PC-9 (cell line): ENCODE measurements at regions of chr17 and their contacts with region 1.

Region 1: GRCh38 chr17:5249615-5250014 is 15.0 kb upstream of the SCIMP start:
- DNase-seq: peak; percentile 59
- H3K4me3 ChIP-seq: no peak overlapping the region
- H3K27ac ChIP-seq: no peak overlapping the region
- H3K4me1 ChIP-seq: no peaks in the 10 kb centered on the region
- H3K27me3 ChIP-seq: no peaks in the 10 kb centered on the region
- CTCF ChIP-seq: peak; percentile 84

Region 2: DNA sequence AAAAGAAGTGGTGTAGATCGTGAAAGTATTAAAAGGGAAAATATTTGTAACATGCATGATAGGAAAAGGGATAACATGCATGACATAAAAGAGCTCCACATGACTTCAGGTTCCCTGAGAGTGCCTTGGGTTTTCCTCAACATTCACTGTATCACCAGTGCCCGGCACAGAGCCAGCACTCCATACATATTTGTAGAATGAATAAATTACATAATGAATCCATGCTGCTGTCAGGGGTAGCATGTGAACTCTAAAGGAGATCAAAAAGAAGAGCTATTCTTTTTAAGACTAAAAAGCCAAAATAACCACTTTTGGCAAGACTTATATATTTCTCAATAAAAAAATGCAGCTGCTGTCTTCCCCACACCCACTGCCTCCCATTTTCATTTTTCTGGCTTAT is 55.3 kb before region 1 on chr17:
- CTCF ChIA-PET with region 1: no interaction called
- POLR2A ChIA-PET with region 1: no interaction called
- intact Hi-C with region 1: no loop called
- DNase-seq: no peak
- H3K4me3 ChIP-seq: no peak overlapping the region
- H3K27ac ChIP-seq: no peak overlapping the region
- H3K4me1 ChIP-seq: peaks cover 5% of the 10 kb centered on the region; the same call in 1 of the 2 replicates
- H3K27me3 ChIP-seq: no peaks in the 10 kb centered on the region
- CTCF ChIP-seq: no peak

Region 3: DNA sequence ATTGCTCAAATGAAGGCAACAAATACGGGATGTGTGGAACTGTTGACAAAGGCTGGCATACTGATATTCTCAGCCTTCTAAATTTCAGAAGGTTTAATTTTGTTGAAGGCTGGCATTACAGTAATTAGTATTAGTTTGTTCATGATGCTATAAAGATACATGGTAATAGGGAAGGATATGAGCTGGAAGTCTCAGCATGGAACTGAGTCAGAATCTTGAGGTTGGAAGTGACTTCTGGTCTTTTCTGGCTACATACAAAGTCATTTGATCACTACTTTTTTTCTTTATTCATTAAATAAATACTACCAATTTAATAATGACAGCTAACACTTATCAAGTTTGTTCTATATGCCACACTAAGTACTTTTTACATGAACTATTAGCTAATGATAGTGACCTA is 55.0 kb after region 1 on chr17:
- CTCF ChIA-PET with region 1: interaction called, 3 read pairs
- POLR2A ChIA-PET with region 1: no interaction called
- intact Hi-C with region 1: loop called (anchors 1 kb)
- DNase-seq: no peak
- H3K4me3 ChIP-seq: no peak overlapping the region
- H3K27ac ChIP-seq: no peak overlapping the region
- H3K4me1 ChIP-seq: no peaks in the 10 kb centered on the region
- H3K27me3 ChIP-seq: no peaks in the 10 kb centered on the region
- CTCF ChIP-seq: no peak

Region 4: GRCh38 chr17:5381542-5381941 is 131.9 kb after region 1 on chr17:
- CTCF ChIA-PET with region 1: interaction called, 6 read pairs
- POLR2A ChIA-PET with region 1: no interaction called
- intact Hi-C with region 1: loop called (anchors 5 kb)
- DNase-seq: no peak
- H3K4me3 ChIP-seq: no peak overlapping the region
- H3K27ac ChIP-seq: peak overlapping the region; percentile 24; the same call in 1 of the 2 replicates
- H3K4me1 ChIP-seq: peaks cover 4% of the 10 kb centered on the region; the same call in 1 of the 2 replicates
- H3K27me3 ChIP-seq: no peaks in the 10 kb centered on the region
- CTCF ChIP-seq: no peak

Region 5: GRCh38 chr17:5419356-5419958 is 169.8 kb after region 1 on chr17 and contains the start of gene NUP88:
- CTCF ChIA-PET with region 1: no interaction called
- POLR2A ChIA-PET with region 1: no interaction called
- intact Hi-C with region 1: loop called (anchors 10 kb)
- DNase-seq: peak; percentile 91 to 96
- H3K4me3 ChIP-seq: peak within 1 kb of the TSS; percentile 98
- H3K27ac ChIP-seq: peak within 1 kb of the TSS; percentile 99
- H3K4me1 ChIP-seq: peaks cover 52% of the 10 kb centered on the region
- H3K27me3 ChIP-seq: no peaks in the 10 kb centered on the region
- CTCF ChIP-seq: no peak
- total RNA-seq, gene NUP88: 88.6 and 93.1 TPM in 2 replicates

Region 6: GRCh38 chr17:5438716-5439445 is 189.3 kb after region 1 on chr17 and contains the start of gene C1QBP:
- CTCF ChIA-PET with region 1: interaction called, 7 read pairs
- POLR2A ChIA-PET with region 1: interaction called, 3 read pairs
- intact Hi-C with region 1: loop called (anchors 1 kb)
- DNase-seq: peak; percentile 82 to 96
- H3K4me3 ChIP-seq: peak within 1 kb of the TSS; percentile 72
- H3K27ac ChIP-seq: peak within 1 kb of the TSS; percentile 28
- H3K4me1 ChIP-seq: peaks cover 18% of the 10 kb centered on the region
- H3K27me3 ChIP-seq: no peaks in the 10 kb centered on the region
- CTCF ChIP-seq: peak; percentile 96
- total RNA-seq, gene C1QBP: 206 and 230 TPM in 2 replicates

Region 7: GRCh38 chr17:6421700-6422604 is 1172.3 kb after region 1 on chr17:
- CTCF ChIA-PET with region 1: no interaction called
- POLR2A ChIA-PET with region 1: no interaction called
- intact Hi-C with region 1: loop called (anchors 10 kb)
- DNase-seq: peak; percentile 58 to 83
- H3K4me3 ChIP-seq: no peak overlapping the region
- H3K27ac ChIP-seq: no peak overlapping the region
- H3K4me1 ChIP-seq: no peaks in the 10 kb centered on the region
- H3K27me3 ChIP-seq: peaks cover 84% of the 10 kb centered on the region
- CTCF ChIP-seq: peak; percentile 95

Region 8: DNA sequence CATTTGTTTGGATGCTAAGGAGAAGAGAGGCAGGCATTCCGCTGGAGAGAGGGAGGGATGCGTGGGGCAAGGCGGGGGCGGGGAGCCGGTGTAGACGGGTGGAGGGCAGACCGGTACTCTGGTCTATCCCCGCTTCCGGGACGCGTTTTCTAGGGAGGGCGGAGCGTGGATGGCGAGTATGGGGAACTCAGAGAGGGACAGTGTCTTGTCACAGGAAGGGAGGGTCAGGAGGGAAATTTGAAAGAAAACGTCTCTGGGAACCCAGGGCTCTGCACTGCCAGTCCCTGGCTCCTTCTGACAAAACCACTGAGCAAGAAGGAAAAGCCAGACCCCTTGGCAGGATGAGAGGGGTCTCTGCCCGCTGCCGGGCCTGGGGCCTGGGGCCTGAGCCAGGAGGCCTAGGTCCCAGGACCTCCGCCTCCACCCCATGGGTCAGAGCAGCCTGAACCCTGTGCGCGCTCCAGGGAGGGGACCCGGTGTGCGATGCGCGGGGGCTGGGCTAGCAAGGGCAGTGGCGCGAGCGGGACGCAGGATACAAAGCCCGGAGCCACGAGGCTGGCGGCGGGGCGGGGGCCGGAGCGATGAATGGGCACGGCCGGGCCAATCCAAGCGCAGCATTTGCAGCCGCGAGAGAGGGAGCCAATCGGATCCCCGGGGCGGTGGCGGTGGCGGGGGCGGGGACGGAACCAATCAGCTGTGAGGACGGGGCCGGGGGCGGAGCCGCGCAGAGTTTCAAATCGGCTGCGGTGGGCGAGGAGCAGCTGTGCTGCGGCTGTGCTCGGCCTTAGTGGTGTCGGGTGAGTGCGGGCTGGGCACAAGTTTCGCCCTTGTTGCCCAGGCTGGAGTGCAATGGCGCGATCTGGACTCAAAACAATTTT is 1194.3 kb after region 1 on chr17 and contains the start of gene PIMREG:
- CTCF ChIA-PET with region 1: interaction called, 12 read pairs
- POLR2A ChIA-PET with region 1: no interaction called
- intact Hi-C with region 1: no loop called
- DNase-seq: peak; percentile 85 to 98
- H3K4me3 ChIP-seq: peak within 1 kb of the TSS; percentile 90
- H3K27ac ChIP-seq: peak within 1 kb of the TSS; percentile 54
- H3K4me1 ChIP-seq: peaks cover 5% of the 10 kb centered on the region; the same call in 1 of the 2 replicates
- H3K27me3 ChIP-seq: 0 out of 2 replicates have a peak, but pooled peaks cover 6% of the 10 kb centered on the region
- CTCF ChIP-seq: no peak
- total RNA-seq, gene PIMREG: 52.2 and 62.3 TPM in 2 replicates